SK-N-SH (cell line): ENCODE measurements at regions of chr6 and their contacts with region 1.

Region 1: GRCh38 chr6:25070547-25071366 is 135.0 kb upstream of the RIPOR2 start:
- DNase-seq: peak; percentile 68
- H3K4me3 ChIP-seq: peak overlapping the region; percentile 33 to 46; a peak in 2 of 4 replicates
- H3K27ac ChIP-seq: no peak overlapping the region; a peak in 1 of 4 replicates
- H3K4me1 ChIP-seq: peaks cover 0 to 2% of the 10 kb centered on the region in 2 experiments; a peak in 2 of 4 replicates
- H3K27me3 ChIP-seq: no peaks in the 10 kb centered on the region
- CTCF ChIP-seq: peak; percentile 96
- EP300 ChIP-seq: no peak
- RAD21 ChIP-seq: peak; percentile 98

Region 2: DNA sequence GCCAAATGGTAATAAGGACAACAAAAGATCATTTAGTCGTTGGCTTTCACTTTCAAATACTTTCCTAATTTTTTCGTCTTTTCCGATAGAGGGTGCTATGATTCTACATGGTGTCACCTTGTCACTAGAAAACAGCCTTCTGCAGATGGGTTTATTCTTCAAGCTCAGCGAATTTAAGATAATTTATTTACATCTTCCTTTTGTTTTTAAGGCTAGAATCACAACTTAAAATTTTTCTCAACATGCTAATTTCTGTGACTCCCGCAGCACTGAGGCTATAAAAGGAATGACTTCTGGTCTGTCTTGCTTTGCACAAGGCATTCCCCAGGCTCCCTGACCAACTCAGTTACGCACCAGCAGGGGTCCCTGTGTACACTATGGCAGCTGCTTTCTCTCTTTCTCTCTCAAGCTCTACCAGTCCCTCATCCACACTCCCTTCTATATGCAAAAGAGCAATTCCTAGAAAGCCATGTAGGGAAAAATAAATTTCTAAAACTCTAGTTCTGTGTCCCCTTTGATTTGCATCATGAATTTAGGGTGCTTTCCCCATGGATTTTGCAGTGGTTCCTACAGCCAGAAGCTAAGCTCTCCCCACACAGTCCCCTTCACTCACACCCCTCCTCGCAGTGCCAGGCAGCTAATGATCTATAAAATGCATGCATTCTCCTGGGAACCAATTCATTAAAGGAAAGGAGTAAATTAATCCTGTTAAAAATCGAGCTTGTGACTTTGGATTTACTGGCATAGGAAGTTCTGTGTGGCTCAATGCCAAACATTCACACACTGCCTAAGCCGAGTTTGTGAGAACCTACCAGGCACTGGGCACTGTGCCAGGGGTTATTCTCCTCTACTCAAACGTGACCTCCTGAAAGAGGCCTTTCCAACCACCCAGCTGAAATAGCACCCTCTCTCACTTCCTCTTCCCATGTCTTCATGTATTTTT is 787.4 kb before region 1 on chr6:
- CTCF ChIA-PET with region 1: no interaction called
- POLR2A ChIA-PET with region 1: no interaction called
- DNase-seq: peak; percentile 78
- H3K4me3 ChIP-seq: peak overlapping the region in 1 of 2 experiments; percentile 40; a peak in 1 of 4 replicates
- H3K27ac ChIP-seq: no peak overlapping the region
- H3K4me1 ChIP-seq: peaks cover 0 to 7% of the 10 kb centered on the region in 2 experiments; a peak in 3 of 4 replicates
- H3K27me3 ChIP-seq: no peaks in the 10 kb centered on the region
- CTCF ChIP-seq: peak; percentile 69
- EP300 ChIP-seq: no peak
- RAD21 ChIP-seq: peak; percentile 64

Region 3: GRCh38 chr6:24844903-24845302 is 225.9 kb before region 1 on chr6:
- CTCF ChIA-PET with region 1: interaction called, 17 read pairs
- POLR2A ChIA-PET with region 1: no interaction called
- DNase-seq: no peak
- H3K4me3 ChIP-seq: no peak overlapping the region
- H3K27ac ChIP-seq: no peak overlapping the region
- H3K4me1 ChIP-seq: no peaks in the 10 kb centered on the region; a peak in 1 of 4 replicates
- H3K27me3 ChIP-seq: no peaks in the 10 kb centered on the region
- CTCF ChIP-seq: no peak
- EP300 ChIP-seq: no peak
- RAD21 ChIP-seq: no peak

Region 4: DNA sequence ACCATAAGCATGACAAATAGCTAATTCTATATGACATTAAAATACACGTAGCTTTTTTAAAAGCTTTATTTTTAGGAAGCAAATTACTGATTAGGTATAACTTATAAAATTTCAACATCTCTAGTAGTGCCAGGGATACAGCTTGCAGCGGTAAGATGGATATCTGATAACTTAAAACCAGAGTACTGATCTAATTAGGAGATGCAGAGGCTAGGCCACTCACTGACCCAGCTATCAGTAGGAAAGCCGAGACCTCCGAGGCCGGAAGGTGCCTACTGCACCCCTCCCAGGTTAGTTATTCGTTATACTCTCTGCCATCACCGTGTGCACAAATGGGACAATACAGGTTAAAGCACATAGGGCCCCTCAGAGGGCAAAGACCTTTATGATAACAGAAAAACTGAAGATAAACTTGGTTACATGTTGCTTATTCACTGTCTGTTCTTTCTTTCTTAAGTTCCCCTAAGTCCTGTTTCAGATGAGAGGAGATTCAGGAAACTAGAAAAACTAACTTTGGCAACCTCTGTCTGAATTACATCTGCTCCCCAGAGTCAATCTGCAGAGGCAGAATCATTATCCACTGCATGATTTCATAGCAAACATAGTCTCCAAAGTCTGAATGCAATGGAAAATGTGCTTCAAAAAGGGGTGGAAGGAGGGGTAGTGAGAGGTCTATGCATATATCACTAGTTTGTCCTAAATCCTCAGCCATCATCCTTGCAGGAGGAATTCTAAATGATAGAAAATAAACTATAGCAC is 195.8 kb before region 1 on chr6:
- CTCF ChIA-PET with region 1: interaction called, 12 read pairs
- POLR2A ChIA-PET with region 1: no interaction called
- DNase-seq: peak; percentile 42
- H3K4me3 ChIP-seq: no peak overlapping the region
- H3K27ac ChIP-seq: no peak overlapping the region; a peak in 1 of 4 replicates
- H3K4me1 ChIP-seq: peaks cover 0 to 6% of the 10 kb centered on the region in 2 experiments; a peak in 2 of 4 replicates
- H3K27me3 ChIP-seq: no peaks in the 10 kb centered on the region
- CTCF ChIP-seq: no peak
- EP300 ChIP-seq: peak in 1 of 2 experiments; percentile 61; a peak in 1 of 4 replicates
- RAD21 ChIP-seq: no peak

Region 5: GRCh38 chr6:24891004-24891403 is 179.8 kb before region 1 on chr6:
- CTCF ChIA-PET with region 1: no interaction called
- POLR2A ChIA-PET with region 1: no interaction called
- DNase-seq: no peak
- H3K4me3 ChIP-seq: no peak overlapping the region
- H3K27ac ChIP-seq: no peak overlapping the region
- H3K4me1 ChIP-seq: no peaks in the 10 kb centered on the region; a peak in 2 of 4 replicates
- H3K27me3 ChIP-seq: no peaks in the 10 kb centered on the region
- CTCF ChIP-seq: no peak
- EP300 ChIP-seq: no peak
- RAD21 ChIP-seq: no peak

Region 6: GRCh38 chr6:25327432-25327831 is 256.7 kb after region 1 on chr6:
- CTCF ChIA-PET with region 1: no interaction called
- POLR2A ChIA-PET with region 1: no interaction called
- DNase-seq: no peak
- H3K4me3 ChIP-seq: no peak overlapping the region
- H3K27ac ChIP-seq: no peak overlapping the region
- H3K4me1 ChIP-seq: peaks cover 0 to 5% of the 10 kb centered on the region in 2 experiments; a peak in 2 of 4 replicates
- H3K27me3 ChIP-seq: no peaks in the 10 kb centered on the region
- CTCF ChIP-seq: no peak
- EP300 ChIP-seq: no peak
- RAD21 ChIP-seq: no peak

Region 7: GRCh38 chr6:25623879-25624278 is 553.1 kb after region 1 on chr6:
- CTCF ChIA-PET with region 1: no interaction called
- POLR2A ChIA-PET with region 1: no interaction called
- DNase-seq: peak; percentile 42
- H3K4me3 ChIP-seq: no peak overlapping the region
- H3K27ac ChIP-seq: peak overlapping the region in 1 of 2 experiments; percentile 48; a peak in 1 of 4 replicates
- H3K4me1 ChIP-seq: peaks cover 0 to 4% of the 10 kb centered on the region in 2 experiments; a peak in 1 of 4 replicates
- H3K27me3 ChIP-seq: no peaks in the 10 kb centered on the region
- CTCF ChIP-seq: no peak
- EP300 ChIP-seq: no peak
- RAD21 ChIP-seq: no peak